Ascending aorta (tissue), 2 donors: ENCODE measurements at regions of chr1 and their contacts with region 1.

Region 1: GRCh38 chr1:115138968-115139367 is 49.7 kb upstream of the TSPAN2 start:
- DNase-seq: peak; percentile 60 to 95
- H3K4me3 ChIP-seq: no peak overlapping the region
- H3K27ac ChIP-seq: peak overlapping the region; percentile 54 to 92
- H3K4me1 ChIP-seq: peaks cover 10 to 32% of the 10 kb centered on the region in 2 donors
- H3K27me3 ChIP-seq: no peaks in the 10 kb centered on the region
- CTCF ChIP-seq: peak; percentile 85 to 90 (median 89)

Region 2: DNA sequence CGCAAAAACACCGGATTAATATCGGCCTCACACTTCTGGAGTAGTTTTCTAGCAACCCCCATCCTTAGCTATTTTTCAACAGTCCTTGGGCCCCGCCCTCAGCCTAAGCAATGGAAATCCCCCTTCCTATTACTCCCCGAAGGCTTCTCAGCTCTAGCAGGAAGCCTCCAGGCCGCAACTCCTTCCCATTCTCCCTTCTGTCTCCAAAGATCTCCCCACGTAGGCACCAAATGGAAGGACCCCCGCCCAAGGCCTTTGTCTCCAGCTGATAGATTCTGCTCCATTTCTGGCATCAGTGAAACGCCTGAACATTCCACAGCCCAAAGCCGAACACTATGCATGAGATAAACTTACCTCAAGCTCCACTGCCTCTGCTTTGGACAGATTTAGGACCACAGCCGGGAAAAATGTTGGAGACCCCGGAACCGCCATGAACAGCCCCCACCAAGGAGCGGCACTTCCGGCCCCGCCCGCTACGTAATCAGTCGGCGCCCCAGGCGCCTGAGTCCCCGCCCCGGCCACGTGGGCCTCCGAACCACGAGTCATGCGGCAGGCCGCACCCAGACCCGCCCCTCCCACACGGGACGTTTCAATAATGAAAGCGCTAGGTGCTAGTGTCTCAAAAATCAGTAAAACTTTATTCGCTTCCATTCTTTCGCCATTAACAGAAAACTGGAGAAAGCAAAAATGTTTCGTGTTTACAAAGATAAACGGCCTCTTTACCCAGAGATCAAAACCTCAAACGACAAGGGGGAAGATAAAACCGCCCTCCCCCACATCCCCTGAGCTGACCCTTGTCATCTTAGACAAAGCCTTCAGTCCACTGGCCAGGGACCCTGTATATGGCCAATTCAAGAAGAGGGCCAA is 422.4 kb before region 1 on chr1 and contains the start of gene NRAS:
- intact Hi-C with region 1: no loop called
- DNase-seq: peak; percentile 71 to 97
- H3K4me3 ChIP-seq: peak within 1 kb of the TSS; percentile 86 to 99
- H3K27ac ChIP-seq: peak within 1 kb of the TSS; percentile 87 to 95
- H3K4me1 ChIP-seq: peaks cover 3 to 12% of the 10 kb centered on the region in 2 donors
- H3K27me3 ChIP-seq: no peaks in the 10 kb centered on the region
- CTCF ChIP-seq: no peak
- total RNA-seq, gene NRAS: 10.7 TPM

Region 3: GRCh38 chr1:115098979-115099692 is 39.8 kb before region 1 on chr1:
- intact Hi-C with region 1: loop called (anchors 2 kb)
- DNase-seq: peak in 1 of 2 donors; percentile 81
- H3K4me3 ChIP-seq: peak overlapping the region; percentile 32 to 61
- H3K27ac ChIP-seq: peak overlapping the region; percentile 82
- H3K4me1 ChIP-seq: peaks cover 0 to 3% of the 10 kb centered on the region in 2 donors
- H3K27me3 ChIP-seq: no peaks in the 10 kb centered on the region
- CTCF ChIP-seq: no peak

Region 4: GRCh38 chr1:115123116-115123515 is 15.9 kb before region 1 on chr1:
- intact Hi-C with region 1: no loop called
- DNase-seq: no peak
- H3K4me3 ChIP-seq: no peak overlapping the region
- H3K27ac ChIP-seq: no peak overlapping the region
- H3K4me1 ChIP-seq: no peaks in the 10 kb centered on the region
- H3K27me3 ChIP-seq: no peaks in the 10 kb centered on the region
- CTCF ChIP-seq: no peak

Region 5: DNA sequence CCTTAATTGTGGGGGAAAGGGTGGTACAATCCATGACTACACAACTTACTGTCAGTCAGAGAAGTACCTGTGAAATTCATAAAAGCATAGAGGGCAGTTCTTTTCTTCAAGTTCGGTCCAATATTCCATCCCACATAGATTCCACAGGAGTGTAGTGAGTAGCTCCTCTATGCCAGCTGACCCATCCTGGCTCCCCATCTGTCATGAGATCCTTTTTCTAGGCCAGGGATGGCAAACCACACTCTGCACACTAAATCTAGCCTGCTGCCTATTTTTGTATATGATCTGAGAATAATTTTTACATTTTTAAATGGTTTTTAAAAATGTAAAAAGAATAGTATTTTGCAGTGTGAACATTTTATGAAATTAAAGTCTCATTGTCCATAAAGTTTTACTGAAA is 57.3 kb after region 1 on chr1:
- intact Hi-C with region 1: no loop called
- DNase-seq: no peak
- H3K4me3 ChIP-seq: no peak overlapping the region
- H3K27ac ChIP-seq: no peak overlapping the region
- H3K4me1 ChIP-seq: peaks cover 0 to 5% of the 10 kb centered on the region in 2 donors
- H3K27me3 ChIP-seq: no peaks in the 10 kb centered on the region
- CTCF ChIP-seq: no peak

Region 6: DNA sequence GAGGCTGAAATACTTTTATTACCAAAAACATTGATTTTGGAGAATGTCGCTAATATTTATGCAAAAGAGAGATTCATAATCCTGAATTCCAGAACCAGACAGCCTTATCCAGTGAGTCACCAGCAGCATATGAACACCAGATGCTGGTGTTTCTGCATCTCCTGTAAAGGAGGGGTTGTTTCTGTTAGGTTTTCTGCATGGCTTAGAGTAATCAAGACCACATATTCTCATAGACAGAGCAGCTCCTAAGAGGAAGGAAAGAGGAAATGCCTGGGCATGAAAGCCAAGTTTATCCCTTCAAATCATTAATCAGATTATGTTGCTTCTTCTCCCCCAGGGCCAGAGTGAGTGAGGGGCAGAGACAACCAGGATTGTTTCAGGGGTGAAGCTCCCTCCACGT is 112.9 kb after region 1 on chr1:
- intact Hi-C with region 1: no loop called
- DNase-seq: no peak
- H3K4me3 ChIP-seq: no peak overlapping the region
- H3K27ac ChIP-seq: no peak overlapping the region
- H3K4me1 ChIP-seq: no peaks in the 10 kb centered on the region
- H3K27me3 ChIP-seq: no peaks in the 10 kb centered on the region
- CTCF ChIP-seq: no peak

Region 7: GRCh38 chr1:115282807-115283208 is 143.8 kb after region 1 on chr1:
- intact Hi-C with region 1: loop called (anchors 5 kb)
- DNase-seq: peak; percentile 61 to 85
- H3K4me3 ChIP-seq: peak overlapping the region; percentile 4 to 51
- H3K27ac ChIP-seq: peak overlapping the region; percentile 91 to 95
- H3K4me1 ChIP-seq: peaks cover 11 to 31% of the 10 kb centered on the region in 2 donors
- H3K27me3 ChIP-seq: no peaks in the 10 kb centered on the region
- CTCF ChIP-seq: no peak

Region 8: DNA sequence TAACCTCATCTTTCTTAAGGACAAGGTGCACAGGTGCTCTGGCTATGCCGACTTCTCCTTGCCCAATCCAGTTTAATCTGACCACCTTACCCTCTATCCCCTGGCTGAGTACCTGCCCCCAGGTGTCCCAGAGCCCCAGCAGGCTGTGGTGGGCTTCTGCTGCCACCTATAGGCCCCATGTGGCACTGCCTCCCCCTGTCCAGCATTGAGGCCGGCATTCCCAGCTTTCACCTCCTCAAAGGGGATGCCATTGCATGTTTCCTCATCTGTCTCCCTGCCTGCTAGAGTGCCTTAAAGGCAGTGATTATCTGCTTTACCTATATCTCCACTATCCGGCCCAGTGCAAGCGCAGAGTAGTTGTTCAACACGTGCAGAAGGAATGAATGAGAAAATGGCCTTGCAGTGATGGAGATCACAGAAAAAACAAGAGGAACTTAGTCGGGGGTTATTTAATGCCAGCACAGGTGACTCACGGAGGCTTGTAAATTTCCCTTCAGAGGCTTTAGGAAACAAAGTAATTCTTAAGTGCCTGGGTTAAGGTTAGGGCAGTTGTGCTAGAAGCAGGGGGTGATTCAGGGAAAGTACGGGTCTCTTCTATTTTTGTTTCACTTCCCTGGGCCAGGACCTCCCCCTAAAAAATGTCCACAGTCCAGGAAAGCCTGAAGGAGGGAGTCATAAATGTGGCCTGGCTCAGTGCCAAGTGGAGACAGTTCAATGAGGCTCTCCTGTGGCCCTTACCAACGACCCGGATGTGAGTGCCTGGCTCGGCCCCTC is 330.9 kb after region 1 on chr1:
- intact Hi-C with region 1: loop called (anchors 2 kb)
- DNase-seq: no peak
- H3K4me3 ChIP-seq: no peak overlapping the region
- H3K27ac ChIP-seq: no peak overlapping the region
- H3K4me1 ChIP-seq: no peaks in the 10 kb centered on the region
- H3K27me3 ChIP-seq: no peaks in the 10 kb centered on the region
- CTCF ChIP-seq: peak; percentile 73 to 90 (median 81)

Region 9: GRCh38 chr1:115771847-115772457 is 633.0 kb after region 1 on chr1:
- intact Hi-C with region 1: loop called (anchors 5 kb)
- DNase-seq: peak in 1 of 2 donors; percentile 77
- H3K4me3 ChIP-seq: peak overlapping the region; percentile 5 to 44
- H3K27ac ChIP-seq: no peak overlapping the region
- H3K4me1 ChIP-seq: no peaks in the 10 kb centered on the region
- H3K27me3 ChIP-seq: no peaks in the 10 kb centered on the region
- CTCF ChIP-seq: peak; percentile 55 to 70 (median 63)